ENCODE measurements at regions of chr19 and their contacts with region 1.

Region 1: GRCh38 chr19:38899447-38900219 is at the starts of genes NFKBIB and SIRT2:
- DNase-seq: peak; percentile 91
- ATAC-seq: peak; percentile 91
- H3K4me3 Mint-ChIP-seq: peak within 1 kb of the TSS; percentile 91
- H3K27ac Mint-ChIP-seq: peak within 1 kb of the TSS; percentile 87
- H3K4me1 Mint-ChIP-seq: peaks cover 41% of the 10 kb centered on the region
- H3K27me3 Mint-ChIP-seq: no peaks in the 10 kb centered on the region
- CTCF ChIP-seq: no peak
- total RNA-seq, gene NFKBIB: 45.5 and 49.5 TPM in 2 replicates
- total RNA-seq, gene SIRT2: 28.4 and 32.7 TPM in 2 replicates

Region 2: GRCh38 chr19:38736413-38737280 is 163.0 kb before region 1 on chr19:
- CTCF ChIA-PET with region 1: no interaction called
- POLR2A ChIA-PET with region 1: interaction called, 3 read pairs
- intact Hi-C with region 1: loop called (anchors 1 kb)
- DNase-seq: peak; percentile 64
- ATAC-seq: peak; percentile 60
- H3K4me3 Mint-ChIP-seq: peak overlapping the region; percentile 71
- H3K27ac Mint-ChIP-seq: peak overlapping the region; percentile 12
- H3K4me1 Mint-ChIP-seq: peaks cover 38% of the 10 kb centered on the region
- H3K27me3 Mint-ChIP-seq: no peaks in the 10 kb centered on the region
- CTCF ChIP-seq: no peak

Region 3: DNA sequence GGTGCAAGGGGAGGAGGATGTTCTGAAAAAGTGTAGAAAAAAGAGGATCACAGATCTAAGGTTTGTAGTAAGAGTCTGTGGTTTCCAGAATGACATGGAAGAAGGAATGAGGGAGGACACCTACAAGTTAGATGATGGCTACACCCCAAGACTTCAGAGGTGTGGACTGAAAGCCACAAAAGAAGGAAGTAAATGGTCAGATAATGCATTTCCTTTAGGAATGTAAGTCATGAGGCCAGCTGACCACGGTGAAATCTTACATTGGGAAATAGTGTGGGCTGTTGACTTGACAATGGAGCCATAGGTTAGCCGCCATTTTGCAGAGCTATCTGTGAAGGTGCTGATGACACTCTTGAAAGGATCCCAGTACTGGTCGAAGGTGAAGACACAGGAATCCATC is 158.0 kb after region 1 on chr19:
- CTCF ChIA-PET with region 1: no interaction called
- POLR2A ChIA-PET with region 1: no interaction called
- intact Hi-C with region 1: no loop called
- DNase-seq: no peak
- ATAC-seq: no peak
- H3K4me3 Mint-ChIP-seq: no peak overlapping the region
- H3K27ac Mint-ChIP-seq: no peak overlapping the region
- H3K4me1 Mint-ChIP-seq: no peaks in the 10 kb centered on the region
- H3K27me3 Mint-ChIP-seq: peaks cover 10% of the 10 kb centered on the region
- CTCF ChIP-seq: no peak